Naive thymus-derived CD4-positive, alpha-beta T cell (primary cell): ENCODE measurements at regions of chr3 and their contacts with region 1.

Region 1: DNA sequence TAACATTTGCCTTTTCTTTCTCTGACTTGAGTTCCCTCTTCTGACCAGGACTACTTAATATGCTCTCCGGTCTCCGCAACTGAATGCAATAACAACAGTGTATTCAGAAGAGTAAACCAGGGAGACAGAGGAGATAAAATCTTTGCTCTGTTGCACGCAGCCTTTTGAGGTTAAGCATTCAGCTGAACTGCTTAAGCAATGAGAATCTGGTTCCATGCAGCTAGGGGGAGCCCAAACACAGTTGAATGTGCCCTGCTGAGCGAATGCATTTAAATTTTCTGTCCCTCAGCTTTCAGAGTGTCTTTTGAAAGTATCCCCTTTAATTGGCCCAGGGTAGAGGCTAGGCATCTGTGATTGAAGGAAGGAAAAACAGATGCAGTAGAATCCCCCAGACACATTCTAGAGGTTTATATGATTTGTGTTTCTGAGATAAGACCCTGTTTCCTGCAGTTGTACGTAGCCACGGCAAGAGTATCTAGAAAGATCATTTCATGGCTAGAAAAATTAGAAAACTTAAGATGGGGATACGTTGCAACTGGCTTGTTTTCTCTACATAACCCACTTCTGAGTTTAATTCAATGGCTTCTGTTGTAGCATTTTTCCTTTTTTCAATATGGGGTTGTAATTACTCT is 309.6 kb downstream of the TUSC7 start:
- DNase-seq: peak in 1 of 9 donors; percentile 23
- ATAC-seq: peak; percentile 56
- H3K4me3 ChIP-seq: no peak overlapping the region
- H3K4me3 Mint-ChIP-seq: no peak overlapping the region
- H3K27ac ChIP-seq: no peak overlapping the region
- H3K27ac Mint-ChIP-seq: no peak overlapping the region
- H3K4me1 ChIP-seq: no peaks in the 10 kb centered on the region
- H3K4me1 Mint-ChIP-seq: no peaks in the 10 kb centered on the region
- H3K27me3 ChIP-seq: no peaks in the 10 kb centered on the region
- H3K27me3 Mint-ChIP-seq: peaks cover 0 to 8% (median 0%) of the 10 kb centered on the region in 5 donors

Region 2: GRCh38 chr3:116767726-116768125 is 251.5 kb before region 1 on chr3:
- CTCF ChIA-PET with region 1: no interaction called
- POLR2A ChIA-PET with region 1: no interaction called
- intact Hi-C with region 1: no loop called
- DNase-seq: no peak
- ATAC-seq: no peak
- H3K4me3 ChIP-seq: no peak overlapping the region
- H3K4me3 Mint-ChIP-seq: no peak overlapping the region
- H3K27ac ChIP-seq: no peak overlapping the region
- H3K27ac Mint-ChIP-seq: no peak overlapping the region
- H3K4me1 ChIP-seq: no peaks in the 10 kb centered on the region
- H3K4me1 Mint-ChIP-seq: no peaks in the 10 kb centered on the region
- H3K27me3 ChIP-seq: no peaks in the 10 kb centered on the region
- H3K27me3 Mint-ChIP-seq: peaks cover 0 to 4% (median 0%) of the 10 kb centered on the region in 5 donors

Region 3: GRCh38 chr3:117005274-117005673 is 13.9 kb before region 1 on chr3:
- CTCF ChIA-PET with region 1: no interaction called
- POLR2A ChIA-PET with region 1: no interaction called
- intact Hi-C with region 1: no loop called
- DNase-seq: no peak
- ATAC-seq: no peak
- H3K4me3 ChIP-seq: no peak overlapping the region
- H3K4me3 Mint-ChIP-seq: no peak overlapping the region
- H3K27ac ChIP-seq: no peak overlapping the region
- H3K27ac Mint-ChIP-seq: no peak overlapping the region
- H3K4me1 ChIP-seq: no peaks in the 10 kb centered on the region
- H3K4me1 Mint-ChIP-seq: no peaks in the 10 kb centered on the region
- H3K27me3 ChIP-seq: no peaks in the 10 kb centered on the region
- H3K27me3 Mint-ChIP-seq: no peaks in the 10 kb centered on the region

Region 4: GRCh38 chr3:117036259-117036799 is 17.1 kb after region 1 on chr3:
- CTCF ChIA-PET with region 1: no interaction called
- POLR2A ChIA-PET with region 1: no interaction called
- intact Hi-C with region 1: no loop called
- DNase-seq: no peak
- ATAC-seq: peak; percentile 90
- H3K4me3 ChIP-seq: no peak overlapping the region
- H3K4me3 Mint-ChIP-seq: no peak overlapping the region
- H3K27ac ChIP-seq: no peak overlapping the region
- H3K27ac Mint-ChIP-seq: no peak overlapping the region
- H3K4me1 ChIP-seq: no peaks in the 10 kb centered on the region
- H3K4me1 Mint-ChIP-seq: peaks cover 0 to 2% (median 0%) of the 10 kb centered on the region in 7 donors
- H3K27me3 ChIP-seq: no peaks in the 10 kb centered on the region
- H3K27me3 Mint-ChIP-seq: no peaks in the 10 kb centered on the region

Region 5: DNA sequence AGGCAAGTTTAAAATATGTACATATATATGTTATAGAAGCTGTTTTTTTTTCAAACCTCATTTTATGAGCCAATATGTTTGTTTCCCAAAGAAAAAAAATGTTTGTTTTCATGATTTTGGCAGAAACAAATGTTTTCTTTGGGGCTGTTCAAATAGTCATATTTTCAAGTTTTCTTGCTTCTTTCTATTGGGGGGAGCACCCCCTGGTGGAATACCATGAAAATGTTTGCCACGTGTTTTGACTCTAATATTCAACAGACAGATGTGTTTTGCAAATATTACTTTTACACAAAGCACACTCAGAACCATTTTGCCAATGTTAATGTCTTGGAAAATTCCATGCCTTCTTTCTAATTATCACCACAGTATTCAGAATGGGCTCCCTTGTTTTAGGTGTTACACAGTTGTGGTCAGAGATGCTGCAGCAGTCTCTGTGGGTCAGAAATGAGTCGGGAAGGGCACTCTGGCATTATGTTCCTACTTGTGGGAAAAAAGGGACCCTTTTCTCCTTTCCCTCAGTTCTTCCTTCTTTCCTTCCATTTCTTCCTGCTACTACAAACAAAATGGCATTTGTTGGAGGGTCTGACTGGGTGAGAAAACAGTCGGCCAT is 507.4 kb after region 1 on chr3:
- CTCF ChIA-PET with region 1: no interaction called
- POLR2A ChIA-PET with region 1: no interaction called
- intact Hi-C with region 1: loop called in 1 of 2 experiments (anchors 2 kb)
- DNase-seq: no peak
- ATAC-seq: no peak
- H3K4me3 ChIP-seq: no peak overlapping the region
- H3K4me3 Mint-ChIP-seq: no peak overlapping the region
- H3K27ac ChIP-seq: no peak overlapping the region
- H3K27ac Mint-ChIP-seq: no peak overlapping the region
- H3K4me1 ChIP-seq: no peaks in the 10 kb centered on the region
- H3K4me1 Mint-ChIP-seq: no peaks in the 10 kb centered on the region
- H3K27me3 ChIP-seq: no peaks in the 10 kb centered on the region
- H3K27me3 Mint-ChIP-seq: no peaks in the 10 kb centered on the region

Region 6: DNA sequence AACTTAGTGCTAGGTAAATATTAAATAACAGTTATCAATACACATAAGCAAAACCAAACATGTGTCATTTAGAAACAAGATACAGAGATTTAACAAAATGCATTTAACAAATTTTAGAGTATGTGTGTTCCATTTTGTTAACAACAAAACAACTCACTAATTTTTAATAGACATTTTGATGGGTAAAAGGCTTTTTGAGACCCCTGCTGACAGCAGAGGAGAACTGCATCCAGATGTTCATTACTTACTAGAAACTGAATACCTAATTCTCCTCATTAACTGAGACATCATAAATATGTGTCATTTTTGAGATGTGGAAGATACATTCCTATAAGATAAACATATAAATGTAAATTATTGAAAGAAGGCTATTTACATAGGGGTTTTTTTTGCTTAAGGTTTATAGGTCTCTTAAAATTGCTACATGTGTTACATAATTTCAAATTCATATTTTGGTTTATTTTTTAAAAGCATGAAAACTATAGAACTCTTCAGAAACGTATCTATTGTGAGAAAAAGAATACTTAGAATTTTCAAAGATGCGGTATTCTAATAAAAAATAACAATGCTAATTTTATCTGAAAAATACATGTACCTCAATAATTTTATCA is 700.2 kb after region 1 on chr3:
- CTCF ChIA-PET with region 1: no interaction called
- POLR2A ChIA-PET with region 1: no interaction called
- intact Hi-C with region 1: loop called in 1 of 2 experiments (anchors 2 kb)
- DNase-seq: no peak
- ATAC-seq: no peak
- H3K4me3 ChIP-seq: no peak overlapping the region
- H3K4me3 Mint-ChIP-seq: no peak overlapping the region
- H3K27ac ChIP-seq: no peak overlapping the region
- H3K27ac Mint-ChIP-seq: no peak overlapping the region
- H3K4me1 ChIP-seq: no peaks in the 10 kb centered on the region
- H3K4me1 Mint-ChIP-seq: no peaks in the 10 kb centered on the region
- H3K27me3 ChIP-seq: no peaks in the 10 kb centered on the region
- H3K27me3 Mint-ChIP-seq: no peaks in the 10 kb centered on the region

Region 7: GRCh38 chr3:117997201-117998049 is 978.2 kb after region 1 on chr3:
- CTCF ChIA-PET with region 1: no interaction called
- POLR2A ChIA-PET with region 1: no interaction called
- intact Hi-C with region 1: loop called in 1 of 2 experiments (anchors 2 kb)
- DNase-seq: peak in 4 of 9 donors; percentile 1 to 52 (median 8)
- ATAC-seq: peak; percentile 71
- H3K4me3 ChIP-seq: no peak overlapping the region
- H3K4me3 Mint-ChIP-seq: no peak overlapping the region
- H3K27ac ChIP-seq: no peak overlapping the region
- H3K27ac Mint-ChIP-seq: no peak overlapping the region
- H3K4me1 ChIP-seq: no peaks in the 10 kb centered on the region
- H3K4me1 Mint-ChIP-seq: peaks cover 0 to 5% (median 0%) of the 10 kb centered on the region in 7 donors
- H3K27me3 ChIP-seq: no peaks in the 10 kb centered on the region
- H3K27me3 Mint-ChIP-seq: peaks cover 0 to 13% (median 0%) of the 10 kb centered on the region in 5 donors